Dendritic cell treated with granulocyte-macrophage colony-stimulating factor and Interleukin-4, amounts not matched to agents 40 ng/mL and 50 ng/mL, for 4 days (primary cell): ENCODE measurements at regions of chr20 and their contacts with region 1.

Region 1: DNA sequence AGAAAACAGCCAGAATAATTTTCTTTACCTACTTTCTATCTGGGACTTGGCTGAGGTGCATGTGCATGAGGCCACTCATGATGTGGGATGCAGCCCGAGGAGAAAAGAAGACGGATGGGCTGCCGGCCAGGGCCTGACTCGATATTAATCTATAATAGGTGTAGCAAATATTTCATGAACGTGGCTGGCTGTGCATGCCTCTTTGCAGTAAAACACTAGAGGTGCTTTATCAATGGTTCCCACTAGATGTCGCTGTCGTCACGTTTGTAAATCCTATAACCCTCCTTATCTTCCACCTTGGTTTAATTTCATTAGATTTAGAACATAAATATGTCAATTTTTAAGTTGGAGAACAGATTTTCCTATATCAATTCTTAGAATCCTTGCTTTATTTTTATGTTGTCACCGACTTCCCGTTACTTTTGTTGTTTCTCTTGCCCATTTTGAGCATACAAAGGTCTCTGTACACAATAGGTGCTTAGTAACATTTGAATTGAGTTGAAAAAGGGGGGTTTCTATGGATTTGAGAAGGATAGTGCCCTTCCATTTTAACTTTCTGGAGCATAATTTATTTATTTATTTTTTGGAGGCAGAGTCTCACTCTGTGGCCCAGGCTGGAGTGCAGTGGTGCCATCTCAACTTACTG is 19.6 kb upstream of the FERMT1 start:
- H3K4me3 Mint-ChIP-seq: no peak overlapping the region
- H3K27ac Mint-ChIP-seq: no peak overlapping the region
- H3K4me1 Mint-ChIP-seq: no peaks in the 10 kb centered on the region
- H3K27me3 Mint-ChIP-seq: peaks cover 7% of the 10 kb centered on the region

Region 2: DNA sequence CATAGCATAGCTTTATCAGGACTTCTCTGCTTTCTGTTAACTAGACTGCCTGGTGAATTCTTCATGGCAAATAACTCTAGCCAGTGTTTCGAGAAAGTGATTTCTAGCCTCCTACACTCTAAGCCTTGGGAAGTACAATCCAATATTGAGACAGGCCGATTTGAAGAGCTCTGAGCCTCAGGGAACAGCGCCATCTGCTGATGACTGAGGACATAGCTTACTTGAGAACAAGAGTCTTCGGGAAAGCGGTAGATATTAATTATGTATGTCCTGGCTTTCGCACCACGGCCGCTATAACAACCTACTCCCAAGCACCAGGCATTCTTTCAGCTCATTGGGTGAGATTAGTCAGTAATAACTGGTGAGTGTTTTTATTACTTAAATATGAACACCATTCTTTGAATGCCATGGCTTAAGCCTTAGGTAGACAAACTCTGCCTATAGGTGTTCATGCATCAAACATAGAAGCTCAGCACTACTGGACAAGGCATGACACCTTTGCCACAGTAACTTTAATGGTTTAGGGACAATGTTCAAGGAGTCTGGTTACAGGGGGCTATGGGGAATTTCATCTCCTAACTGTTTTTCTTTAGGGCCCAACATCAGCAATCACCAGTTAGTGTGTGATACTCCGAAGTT is 1143.6 kb after region 1 on chr20:
- intact Hi-C with region 1: loop called (anchors 5 kb)
- H3K4me3 Mint-ChIP-seq: no peak overlapping the region
- H3K27ac Mint-ChIP-seq: no peak overlapping the region
- H3K4me1 Mint-ChIP-seq: no peaks in the 10 kb centered on the region
- H3K27me3 Mint-ChIP-seq: no peaks in the 10 kb centered on the region

Region 3: GRCh38 chr20:7375905-7376304 is 1233.4 kb after region 1 on chr20:
- intact Hi-C with region 1: loop called (anchors 5 kb)
- H3K4me3 Mint-ChIP-seq: no peak overlapping the region
- H3K27ac Mint-ChIP-seq: no peak overlapping the region
- H3K4me1 Mint-ChIP-seq: no peaks in the 10 kb centered on the region
- H3K27me3 Mint-ChIP-seq: no peaks in the 10 kb centered on the region